ENCODE measurements at regions of chrX and their contacts with region 1.

Region 1: GRCh38 chrX:136652822-136653723 is 5.1 kb downstream of the CD40LG start:
- DNase-seq: peak; percentile 51
- H3K4me3 Mint-ChIP-seq: peak overlapping the region; percentile 96
- H3K27ac Mint-ChIP-seq: peak overlapping the region; percentile 91
- H3K4me1 Mint-ChIP-seq: peaks cover 55% of the 10 kb centered on the region
- H3K27me3 Mint-ChIP-seq: no peaks in the 10 kb centered on the region

Region 2: DNA sequence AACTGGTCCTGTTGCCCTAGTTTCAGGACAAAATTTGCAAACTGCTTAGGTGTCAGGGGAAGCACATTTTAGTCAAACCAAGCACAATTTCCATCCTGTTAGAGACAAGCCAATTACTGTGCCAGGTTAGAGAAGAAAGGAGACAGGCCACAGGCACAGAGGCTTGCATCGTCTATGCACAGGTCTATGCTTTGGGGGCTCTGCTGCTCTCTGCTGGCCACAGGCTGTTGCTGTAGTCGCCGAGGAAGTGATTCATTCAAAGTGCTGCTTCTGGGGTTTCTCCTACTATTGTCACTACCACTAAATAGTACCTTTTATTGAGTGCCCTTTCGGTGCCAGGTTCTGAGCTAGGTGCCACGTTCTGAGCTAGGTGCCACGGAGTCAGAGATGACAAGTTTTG is 75.5 kb before region 1 on chrX:
- CTCF ChIA-PET with region 1: no interaction called
- POLR2A ChIA-PET with region 1: interaction called, 13 read pairs
- DNase-seq: peak; percentile 80
- H3K4me3 Mint-ChIP-seq: peak overlapping the region; percentile 31
- H3K27ac Mint-ChIP-seq: peak overlapping the region; percentile 76
- H3K4me1 Mint-ChIP-seq: peaks cover 39% of the 10 kb centered on the region
- H3K27me3 Mint-ChIP-seq: no peaks in the 10 kb centered on the region

Region 3: DNA sequence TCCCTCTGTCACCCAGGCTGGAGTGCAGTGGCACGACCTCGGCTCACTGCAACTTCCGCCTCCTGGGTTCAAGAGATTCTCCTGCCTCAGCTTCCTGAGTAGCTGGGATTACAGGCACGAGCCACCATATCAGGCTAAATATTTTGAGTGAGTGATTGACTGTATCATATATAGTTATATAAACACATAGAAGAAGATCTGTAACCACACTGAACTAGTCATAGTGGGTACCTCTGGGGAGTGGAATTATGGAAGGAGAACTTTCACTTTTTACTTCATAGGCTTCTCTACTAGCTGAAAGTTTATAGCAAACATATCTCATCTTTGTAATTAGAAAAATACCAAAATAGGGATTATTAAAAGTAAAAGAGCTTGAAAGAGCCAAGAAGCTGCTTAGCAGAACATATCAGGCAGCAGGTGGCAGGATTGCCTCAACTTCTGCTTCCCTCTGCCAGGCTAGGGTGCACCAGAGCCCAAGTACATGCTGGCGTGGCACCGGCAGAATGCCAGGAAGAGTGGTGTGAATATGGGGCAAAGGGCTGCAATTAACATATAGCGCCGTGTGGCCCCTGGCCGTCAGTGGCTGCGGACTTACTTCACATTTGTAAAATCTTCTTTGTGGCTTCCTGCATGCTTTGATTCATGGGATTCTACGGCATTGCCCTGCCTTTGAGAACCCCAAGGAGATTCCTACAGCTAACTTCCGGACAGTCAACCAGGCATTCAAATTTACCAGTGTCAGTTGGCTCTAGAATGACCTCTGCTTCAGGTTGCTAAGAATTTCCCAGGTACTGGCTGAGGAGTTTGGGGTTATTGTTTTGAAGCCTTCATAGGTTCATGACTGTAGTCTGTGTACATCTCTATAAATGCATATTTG is 44.5 kb before region 1 on chrX:
- CTCF ChIA-PET with region 1: interaction called, 11 read pairs
- POLR2A ChIA-PET with region 1: interaction called, 34 read pairs
- DNase-seq: peak; percentile 72
- H3K4me3 Mint-ChIP-seq: peak overlapping the region; percentile 41
- H3K27ac Mint-ChIP-seq: peak overlapping the region; percentile 67
- H3K4me1 Mint-ChIP-seq: peaks cover 57% of the 10 kb centered on the region
- H3K27me3 Mint-ChIP-seq: no peaks in the 10 kb centered on the region

Region 4: GRCh38 chrX:136626237-136626636 is 26.8 kb before region 1 on chrX:
- CTCF ChIA-PET with region 1: interaction called, 5 read pairs
- POLR2A ChIA-PET with region 1: interaction called, 90 read pairs
- DNase-seq: no peak
- H3K4me3 Mint-ChIP-seq: peak overlapping the region; percentile 10
- H3K27ac Mint-ChIP-seq: peak overlapping the region; percentile 95
- H3K4me1 Mint-ChIP-seq: peaks cover 99% of the 10 kb centered on the region
- H3K27me3 Mint-ChIP-seq: no peaks in the 10 kb centered on the region

Region 5: GRCh38 chrX:136665258-136665900 is 12.3 kb after region 1 on chrX:
- CTCF ChIA-PET with region 1: interaction called, 5 read pairs
- POLR2A ChIA-PET with region 1: interaction called, 27 read pairs
- DNase-seq: no peak
- H3K4me3 Mint-ChIP-seq: peak overlapping the region; percentile 44
- H3K27ac Mint-ChIP-seq: peak overlapping the region; percentile 84
- H3K4me1 Mint-ChIP-seq: peaks cover 83% of the 10 kb centered on the region
- H3K27me3 Mint-ChIP-seq: no peaks in the 10 kb centered on the region

Region 6: GRCh38 chrX:136694431-136695087 is 41.5 kb after region 1 on chrX:
- CTCF ChIA-PET with region 1: interaction called, 13 read pairs
- POLR2A ChIA-PET with region 1: interaction called, 22 read pairs
- DNase-seq: peak; percentile 28
- H3K4me3 Mint-ChIP-seq: peak overlapping the region; percentile 71
- H3K27ac Mint-ChIP-seq: peak overlapping the region; percentile 98
- H3K4me1 Mint-ChIP-seq: peaks cover 82% of the 10 kb centered on the region
- H3K27me3 Mint-ChIP-seq: no peaks in the 10 kb centered on the region